ENCODE measurements at regions of chr5 and their contacts with region 1.

Region 1: GRCh38 chr5:82312373-82312856 is 34.3 kb upstream of the RPS23 start:
- DNase-seq: no peak
- H3K4me3 ChIP-seq: no peak overlapping the region
- H3K27me3 ChIP-seq: no peaks in the 10 kb centered on the region
- CTCF ChIP-seq: peak; percentile 98

Region 2: DNA sequence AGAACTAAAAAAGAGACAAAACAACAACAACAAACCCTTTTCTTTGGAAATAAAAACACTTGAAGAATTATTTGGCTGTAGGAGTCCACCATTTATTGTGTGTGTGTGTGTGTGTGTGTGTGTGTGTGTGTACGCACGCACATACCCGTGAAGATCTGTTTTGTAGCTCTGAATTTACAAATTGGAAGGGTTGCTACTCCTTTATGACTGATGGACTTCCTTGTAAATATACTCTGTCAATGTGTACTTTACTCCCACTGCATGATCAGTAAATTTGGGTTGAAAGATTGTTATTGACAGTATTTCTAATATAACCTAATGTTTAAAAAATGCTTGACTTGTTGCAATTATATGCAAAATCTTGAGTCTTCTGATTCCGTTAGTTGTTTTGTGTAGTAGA is 192.5 kb before region 1 on chr5:
- CTCF ChIA-PET with region 1: no interaction called
- POLR2A ChIA-PET with region 1: no interaction called
- DNase-seq: no peak
- H3K4me3 ChIP-seq: no peak overlapping the region
- H3K27me3 ChIP-seq: no peaks in the 10 kb centered on the region
- CTCF ChIP-seq: no peak

Region 3: DNA sequence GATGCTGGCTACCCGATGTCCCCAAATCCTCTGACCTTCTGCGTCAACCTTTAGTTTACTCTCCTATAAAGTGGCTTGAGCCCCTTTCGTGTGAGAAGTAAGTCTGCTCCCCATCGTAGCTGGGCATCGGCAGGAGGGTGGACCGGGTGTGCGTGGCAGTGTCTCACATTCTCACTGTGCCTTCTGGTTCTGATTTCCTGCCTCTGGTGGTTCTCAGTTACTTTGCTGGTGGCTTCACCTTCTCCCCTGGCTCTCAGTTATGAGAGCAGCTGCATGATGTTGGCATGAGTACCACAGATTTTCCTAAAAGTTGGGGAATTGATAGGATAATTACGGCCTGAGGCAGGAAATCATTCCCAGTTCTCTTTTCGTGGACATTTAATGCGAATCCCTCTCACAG is 12.7 kb after region 1 on chr5:
- CTCF ChIA-PET with region 1: interaction called, 12 read pairs
- POLR2A ChIA-PET with region 1: no interaction called
- DNase-seq: no peak
- H3K4me3 ChIP-seq: no peak overlapping the region
- H3K27me3 ChIP-seq: peaks cover 2% of the 10 kb centered on the region
- CTCF ChIP-seq: no peak

Measured in BJ (cell line).